Psoas muscle (tissue), 8 donors: ENCODE measurements at regions of chr4 and their contacts with region 1.

Region 1: GRCh38 chr4:174120446-174121295 is 162.8 kb downstream of the FBXO8 start:
- DNase-seq: peak; percentile 20 to 56
- ATAC-seq: peak in 1 of 4 donors; percentile 61
- H3K4me3 ChIP-seq: peak overlapping the region; percentile 39
- H3K27ac ChIP-seq: no peak overlapping the region
- H3K4me1 ChIP-seq: no peaks in the 10 kb centered on the region
- H3K27me3 ChIP-seq: peaks cover 0 to 15% (median 0%) of the 10 kb centered on the region in 3 donors
- CTCF ChIP-seq: peak; percentile 30

Region 2: GRCh38 chr4:173500841-173501591 is 619.7 kb before region 1 on chr4:
- intact Hi-C with region 1: loop called (anchors 5 kb)
- DNase-seq: no peak
- ATAC-seq: no peak
- H3K4me3 ChIP-seq: peak overlapping the region; percentile 49
- H3K27ac ChIP-seq: no peak overlapping the region
- H3K4me1 ChIP-seq: no peaks in the 10 kb centered on the region
- H3K27me3 ChIP-seq: peaks cover 4 to 82% (median 25%) of the 10 kb centered on the region in 3 donors
- CTCF ChIP-seq: no peak

Region 3: DNA sequence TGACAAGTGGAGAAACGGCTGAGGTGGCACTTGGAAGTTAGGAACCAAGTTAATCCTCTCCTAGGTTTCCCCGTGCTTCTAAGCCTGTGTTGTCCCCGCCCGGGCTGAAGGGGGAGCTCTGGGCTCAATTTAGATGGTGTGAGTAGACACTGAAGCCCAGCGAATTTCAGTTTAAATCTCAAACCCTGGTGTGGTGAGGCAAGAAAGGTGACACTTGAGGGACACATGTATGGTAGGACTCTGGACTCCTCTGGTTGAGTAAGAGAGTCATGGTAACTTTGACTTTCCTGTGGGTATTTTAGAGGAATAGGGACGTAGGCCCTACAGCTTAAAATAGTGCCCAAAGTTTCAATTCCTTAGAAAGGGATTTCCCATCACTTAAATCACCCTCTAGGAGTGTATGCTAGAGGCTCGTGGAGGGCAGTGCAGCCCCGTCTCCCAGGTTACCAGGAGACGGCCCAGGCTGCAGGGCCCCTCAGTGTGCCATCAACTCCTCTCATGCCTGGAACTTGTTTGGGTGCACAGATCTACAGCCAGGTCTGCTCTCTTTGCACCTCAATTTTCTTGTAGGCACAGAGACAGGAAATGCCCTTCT is 614.6 kb before region 1 on chr4:
- intact Hi-C with region 1: loop called (anchors 5 kb)
- DNase-seq: no peak
- ATAC-seq: peak in 3 of 4 donors; percentile 48 to 81 (median 56)
- H3K4me3 ChIP-seq: no peak overlapping the region
- H3K27ac ChIP-seq: no peak overlapping the region
- H3K4me1 ChIP-seq: no peaks in the 10 kb centered on the region
- H3K27me3 ChIP-seq: peaks cover 0 to 88% (median 34%) of the 10 kb centered on the region in 3 donors
- CTCF ChIP-seq: peak; percentile 50

Region 4: GRCh38 chr4:174023641-174024040 is 97.0 kb before region 1 on chr4:
- intact Hi-C with region 1: no loop called
- DNase-seq: no peak
- ATAC-seq: no peak
- H3K4me3 ChIP-seq: no peak overlapping the region
- H3K27ac ChIP-seq: no peak overlapping the region
- H3K4me1 ChIP-seq: no peaks in the 10 kb centered on the region
- H3K27me3 ChIP-seq: no peaks in the 10 kb centered on the region
- CTCF ChIP-seq: no peak

Region 5: GRCh38 chr4:174794706-174795105 is 674.0 kb after region 1 on chr4:
- intact Hi-C with region 1: no loop called
- DNase-seq: no peak
- ATAC-seq: no peak
- H3K4me3 ChIP-seq: no peak overlapping the region
- H3K27ac ChIP-seq: no peak overlapping the region
- H3K4me1 ChIP-seq: no peaks in the 10 kb centered on the region
- H3K27me3 ChIP-seq: no peaks in the 10 kb centered on the region
- CTCF ChIP-seq: no peak